Lower lobe of right lung (tissue), 2 donors: ENCODE measurements at regions of chr16 and their contacts with region 1.

Region 1: GRCh38 chr16:77584205-77584859 is 138.0 kb upstream of the NUDT7 start:
- DNase-seq: no peak
- ATAC-seq: peak; percentile 73 to 77
- H3K4me3 ChIP-seq: no peak overlapping the region
- H3K27ac ChIP-seq: no peak overlapping the region
- H3K4me1 ChIP-seq: no peaks in the 10 kb centered on the region
- H3K27me3 ChIP-seq: no peaks in the 10 kb centered on the region
- CTCF ChIP-seq: peak; percentile 90

Region 2: DNA sequence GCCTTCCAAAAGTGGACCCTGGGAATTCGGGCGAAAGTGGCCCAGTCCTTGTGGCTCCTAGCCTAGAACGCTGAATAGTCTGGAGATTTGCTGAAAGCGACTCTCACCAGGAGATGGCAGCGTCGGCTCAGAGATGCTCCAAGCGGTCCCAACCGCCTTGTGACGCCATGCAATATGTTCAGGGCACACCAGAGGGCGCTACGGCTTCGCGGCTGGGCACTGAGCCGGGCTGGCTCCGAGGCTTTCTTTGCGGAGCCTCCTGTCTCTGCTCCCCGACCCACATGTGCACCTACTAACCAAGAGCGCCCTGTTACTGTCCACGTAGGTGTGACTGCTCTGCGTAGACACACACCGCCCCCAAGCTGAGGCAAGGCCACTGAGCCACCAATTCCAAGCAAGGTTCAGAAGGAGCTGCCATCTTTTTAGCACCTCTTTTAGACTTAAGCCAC is 348.2 kb before region 1 on chr16:
- intact Hi-C with region 1: loop called (anchors 5 kb)
- DNase-seq: peak; percentile 88
- ATAC-seq: peak; percentile 99 to 100
- H3K4me3 ChIP-seq: no peak overlapping the region
- H3K27ac ChIP-seq: no peak overlapping the region
- H3K4me1 ChIP-seq: no peaks in the 10 kb centered on the region
- H3K27me3 ChIP-seq: peaks cover 10% of the 10 kb centered on the region
- CTCF ChIP-seq: peak; percentile 99

Region 3: GRCh38 chr16:77335652-77336234 is 248.6 kb before region 1 on chr16:
- intact Hi-C with region 1: no loop called
- DNase-seq: no peak
- ATAC-seq: no peak
- H3K4me3 ChIP-seq: no peak overlapping the region
- H3K27ac ChIP-seq: no peak overlapping the region
- H3K4me1 ChIP-seq: no peaks in the 10 kb centered on the region
- H3K27me3 ChIP-seq: no peaks in the 10 kb centered on the region
- CTCF ChIP-seq: no peak